ENCODE measurements at regions of chr10 and their contacts with region 1.

Region 1: DNA sequence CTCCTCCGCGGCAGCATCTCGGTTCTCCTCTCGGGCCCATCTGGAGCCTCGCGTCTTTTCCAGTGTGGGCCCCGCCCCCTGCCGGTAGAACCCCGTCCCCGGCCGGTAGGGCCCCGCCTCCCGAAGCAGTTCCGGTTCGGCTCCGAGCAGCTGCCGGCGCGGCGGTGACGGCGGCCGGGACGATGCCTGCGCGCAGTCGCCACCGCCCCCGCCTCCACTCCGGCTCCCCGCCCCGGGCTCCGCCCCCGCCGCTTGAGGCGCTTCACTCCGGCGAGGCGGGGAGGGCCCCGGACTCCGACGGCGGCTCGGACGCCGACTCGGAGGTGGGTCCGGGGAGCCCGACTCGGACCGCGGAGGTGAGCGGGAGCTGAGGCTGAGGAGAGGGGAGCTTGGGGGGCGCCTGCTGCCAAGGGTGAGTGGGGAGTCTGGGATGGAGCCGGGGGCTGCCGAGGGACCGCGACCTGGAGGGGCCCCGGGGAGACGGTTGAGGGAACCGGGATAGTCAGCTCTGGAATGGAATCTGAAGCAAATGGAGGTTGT is at the start of gene SAMD8:
- DNase-seq: peak; percentile 97
- ATAC-seq: peak; percentile 87
- H3K4me3 Mint-ChIP-seq: peak within 1 kb of the TSS; percentile 89
- H3K27ac Mint-ChIP-seq: peak within 1 kb of the TSS; percentile 91
- H3K4me1 Mint-ChIP-seq: peaks cover 43% of the 10 kb centered on the region
- H3K27me3 Mint-ChIP-seq: peaks cover 3% of the 10 kb centered on the region
- total RNA-seq, gene SAMD8: 21.0 to 22.7 TPM

Region 2: GRCh38 chr10:75165684-75166622 is 54.5 kb after region 1 on chr10:
- POLR2A ChIA-PET with region 1: interaction called, 11 read pairs
- DNase-seq: no peak
- ATAC-seq: peak; percentile 79
- H3K4me3 Mint-ChIP-seq: peak overlapping the region; percentile 74
- H3K27ac Mint-ChIP-seq: peak overlapping the region; percentile 93
- H3K4me1 Mint-ChIP-seq: peaks cover 39% of the 10 kb centered on the region
- H3K27me3 Mint-ChIP-seq: no peaks in the 10 kb centered on the region

Region 3: DNA sequence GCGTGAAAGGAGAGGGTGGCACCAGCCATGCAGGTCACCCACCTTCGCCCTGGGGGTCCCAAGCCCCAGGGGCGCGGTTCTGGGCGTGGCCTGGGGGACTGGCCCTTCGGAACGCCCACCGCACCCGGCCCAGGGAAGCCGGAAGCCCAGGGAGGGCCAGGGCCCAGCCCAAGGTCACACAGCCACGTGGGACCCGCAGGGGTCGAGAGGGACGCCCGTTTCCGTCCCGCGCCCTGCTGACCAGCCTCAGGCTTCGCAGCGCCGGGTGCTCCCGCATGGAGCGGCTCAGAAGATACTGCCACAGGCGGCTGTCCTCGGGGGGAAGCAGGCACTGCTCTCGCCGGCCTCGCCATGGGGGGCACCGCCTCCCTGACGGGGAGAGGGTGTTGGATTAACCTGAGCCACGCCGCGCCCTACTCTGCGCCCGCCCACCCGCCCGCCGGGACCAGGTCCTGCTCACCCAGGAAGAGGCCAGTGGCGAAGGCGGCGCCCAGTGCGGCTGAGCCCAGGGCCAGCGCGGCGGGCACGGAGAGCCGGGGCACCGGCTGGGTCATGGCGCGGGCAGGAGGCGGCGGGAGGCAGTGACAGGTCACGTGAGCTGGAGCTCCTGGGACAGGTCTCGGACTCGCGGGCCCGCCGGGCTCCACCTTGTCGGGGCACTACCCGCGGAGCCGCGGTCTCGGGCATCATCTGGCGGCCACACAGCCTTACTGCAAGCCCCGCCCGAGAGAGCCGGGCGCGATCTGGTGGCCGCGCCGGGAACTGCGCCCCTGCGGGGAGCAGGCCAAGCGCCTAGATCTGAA is 124.1 kb after region 1 on chr10 and contains the start of gene COMTD1:
- POLR2A ChIA-PET with region 1: interaction called, 41 read pairs
- DNase-seq: peak; percentile 99
- ATAC-seq: peak; percentile 71
- H3K4me3 Mint-ChIP-seq: peak within 1 kb of the TSS; percentile 87
- H3K27ac Mint-ChIP-seq: peak within 1 kb of the TSS; percentile 94
- H3K4me1 Mint-ChIP-seq: peaks cover 20% of the 10 kb centered on the region
- H3K27me3 Mint-ChIP-seq: no peaks in the 10 kb centered on the region
- total RNA-seq, gene COMTD1: 40.8 to 42.3 TPM

Measured in activated naive CD8-positive, alpha-beta T cell treated with anti-CD3 and anti-CD28 coated beads, Interleukin-2, amount 10 ng/mL, durations not matched to agents 7 days and 5 days (primary cell).